Mammary epithelial cell (primary cell): ENCODE measurements at regions of chr2 and their contacts with region 1.

Region 1: DNA sequence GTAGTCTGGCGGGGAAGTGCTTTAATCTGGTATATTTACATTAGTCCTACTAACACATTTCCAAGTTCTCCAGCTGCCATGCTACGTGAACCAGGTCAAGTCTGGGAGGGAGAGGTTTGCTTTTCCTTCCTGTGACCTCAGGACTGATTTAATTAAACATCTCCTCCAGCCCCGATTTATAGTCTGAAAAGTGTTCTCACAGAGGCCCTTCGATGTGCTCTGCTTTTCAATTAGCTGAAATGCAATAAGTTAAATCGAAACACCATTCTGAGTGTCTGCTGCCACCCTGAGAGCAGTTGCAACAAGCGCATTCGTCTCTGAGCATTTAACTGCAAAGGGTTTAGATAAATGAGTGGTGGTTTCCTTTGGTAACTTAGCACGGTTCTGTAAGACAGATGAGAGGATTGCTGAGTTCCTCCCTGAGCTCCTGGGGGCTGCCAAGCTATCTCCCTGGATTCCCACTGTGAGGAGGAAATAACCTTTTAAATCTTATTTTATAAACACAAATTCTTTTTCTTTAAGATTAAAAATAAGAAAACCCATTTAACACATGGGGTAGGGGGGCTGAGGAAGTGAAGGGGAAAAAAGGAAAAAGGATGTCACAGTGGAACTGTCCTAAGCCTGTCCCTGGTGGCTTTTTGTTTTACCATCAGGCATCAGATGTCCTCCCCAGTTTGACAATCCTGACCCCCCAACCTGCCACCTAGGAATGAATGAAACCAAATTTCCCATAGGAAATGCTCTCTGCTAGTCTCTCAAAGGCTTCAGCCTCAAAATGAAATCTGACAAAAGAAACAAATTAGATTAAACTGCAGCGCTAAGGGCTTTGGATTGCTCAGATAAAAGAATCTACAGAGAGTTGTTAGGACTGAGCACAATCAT is 56.5 kb upstream of the CREB1 start:
- DNase-seq: peak; percentile 68
- H3K4me3 ChIP-seq: no peak overlapping the region
- H3K27ac ChIP-seq: peak overlapping the region; percentile 20
- H3K4me1 ChIP-seq: peaks cover 24% of the 10 kb centered on the region
- H3K27me3 ChIP-seq: no peaks in the 10 kb centered on the region
- CTCF ChIP-seq: peak; percentile 87 to 88

Region 2: DNA sequence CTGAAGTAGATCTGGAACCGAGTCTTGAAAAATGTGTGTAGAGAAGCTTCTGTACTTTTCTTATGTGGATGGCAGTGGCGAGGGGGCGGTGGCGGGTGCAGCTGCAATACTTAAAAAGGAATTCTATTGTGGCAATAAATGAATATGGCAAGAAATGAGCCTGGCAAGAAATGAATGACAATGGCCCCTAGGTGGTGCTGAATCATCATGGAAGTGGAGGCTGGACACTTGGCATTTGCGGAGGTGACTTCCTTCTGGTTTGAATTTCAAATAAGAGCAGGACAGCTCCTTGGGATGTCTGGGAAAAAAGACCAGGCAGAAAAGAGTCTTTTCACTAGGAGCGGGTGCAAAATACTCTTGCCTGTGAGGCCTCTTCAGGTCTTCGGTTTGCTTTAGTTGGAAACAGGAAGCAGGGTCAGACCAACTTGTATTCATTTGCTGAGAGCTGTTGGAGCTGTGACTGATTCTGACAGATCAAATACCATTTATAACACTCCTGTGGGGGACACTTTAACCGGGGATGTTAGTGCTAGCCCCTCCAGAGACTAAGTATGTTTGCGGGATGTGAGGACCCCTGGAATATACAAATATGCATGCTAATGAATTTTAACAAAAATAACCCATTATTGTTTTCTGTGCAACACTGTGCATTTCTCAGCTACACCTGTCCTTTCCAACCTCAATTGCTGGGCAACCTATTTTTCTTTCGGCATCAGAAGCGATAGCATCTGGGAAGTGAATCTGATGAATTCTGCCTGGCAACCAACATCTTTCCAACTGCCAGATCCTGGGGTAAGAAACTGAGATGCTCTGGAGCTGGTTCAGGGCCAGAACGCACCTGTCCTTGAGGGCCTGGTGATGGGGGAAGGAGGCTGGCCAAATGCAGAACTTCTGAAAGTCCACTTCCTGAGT is 672.5 kb before region 1 on chr2:
- CTCF ChIA-PET with region 1: no interaction called
- dilution Hi-C with region 1: no loop called
- in situ Hi-C with region 1: loop called (anchors 5 kb)
- intact Hi-C with region 1: loop called (anchors 1 kb)
- DNase-seq: peak; percentile 69
- H3K4me3 ChIP-seq: no peak overlapping the region
- H3K27ac ChIP-seq: no peak overlapping the region
- H3K4me1 ChIP-seq: no peaks in the 10 kb centered on the region
- H3K27me3 ChIP-seq: no peaks in the 10 kb centered on the region
- CTCF ChIP-seq: peak; percentile 66 to 75

Region 3: GRCh38 chr2:207073801-207074678 is 399.2 kb before region 1 on chr2:
- CTCF ChIA-PET with region 1: no interaction called
- dilution Hi-C with region 1: no loop called
- in situ Hi-C with region 1: no loop called
- intact Hi-C with region 1: loop called (anchors 10 kb)
- DNase-seq: no peak
- H3K4me3 ChIP-seq: no peak overlapping the region
- H3K27ac ChIP-seq: no peak overlapping the region
- H3K4me1 ChIP-seq: no peaks in the 10 kb centered on the region
- H3K27me3 ChIP-seq: no peaks in the 10 kb centered on the region
- CTCF ChIP-seq: no peak

Region 4: DNA sequence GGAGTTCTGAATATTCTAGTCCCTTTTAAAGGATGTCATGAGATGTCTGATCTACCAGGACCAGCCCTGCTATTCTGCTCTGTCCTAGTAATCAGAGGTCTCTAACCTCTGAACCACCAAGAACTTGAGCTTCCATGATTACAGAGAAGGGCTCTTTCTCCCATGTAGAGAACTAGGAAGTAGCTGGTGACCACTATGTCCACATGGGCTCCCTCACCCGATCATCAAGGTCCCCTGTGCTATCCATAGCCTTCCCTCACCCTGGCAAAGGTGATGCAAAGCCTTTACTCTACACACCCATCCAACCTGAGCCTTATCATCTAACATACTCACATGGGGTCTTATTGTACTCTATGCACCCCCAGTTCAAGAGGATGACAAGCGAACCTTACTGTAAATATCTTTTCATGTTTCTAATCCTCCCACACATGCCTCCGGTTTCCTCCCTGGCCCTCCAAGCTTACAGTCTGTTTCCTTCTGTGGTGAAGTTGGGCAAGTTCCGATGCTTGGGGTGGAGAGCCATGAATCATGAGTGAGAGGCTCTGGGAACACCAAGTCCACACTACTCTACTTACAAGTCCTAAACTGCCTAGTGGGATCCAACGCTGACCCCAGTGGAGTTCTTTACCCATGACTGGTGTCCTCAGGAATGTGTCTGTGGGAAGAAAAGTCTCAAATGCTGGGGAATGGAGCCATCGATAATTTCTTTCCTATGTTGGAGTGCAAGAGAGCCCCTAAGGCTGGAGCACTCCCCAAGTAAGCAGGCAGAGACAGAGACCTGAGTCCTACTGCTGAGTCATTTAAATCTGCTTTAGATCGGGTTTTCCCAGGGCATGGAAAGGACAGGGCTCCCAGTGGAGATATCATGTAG is 234.2 kb before region 1 on chr2:
- CTCF ChIA-PET with region 1: no interaction called
- dilution Hi-C with region 1: no loop called
- in situ Hi-C with region 1: no loop called
- intact Hi-C with region 1: loop called (anchors 1 kb)
- DNase-seq: peak; percentile 100
- H3K4me3 ChIP-seq: peak overlapping the region; percentile 31 to 84 (median 78)
- H3K27ac ChIP-seq: peak overlapping the region; percentile 100
- H3K4me1 ChIP-seq: peaks cover 51% of the 10 kb centered on the region
- H3K27me3 ChIP-seq: no peaks in the 10 kb centered on the region
- CTCF ChIP-seq: no peak

Region 5: GRCh38 chr2:207394812-207395534 is 78.3 kb before region 1 on chr2:
- CTCF ChIA-PET with region 1: no interaction called
- dilution Hi-C with region 1: no loop called
- in situ Hi-C with region 1: no loop called
- intact Hi-C with region 1: loop called (anchors 2 kb)
- DNase-seq: peak; percentile 100
- H3K4me3 ChIP-seq: no peak overlapping the region
- H3K27ac ChIP-seq: peak overlapping the region; percentile 98
- H3K4me1 ChIP-seq: peaks cover 36% of the 10 kb centered on the region
- H3K27me3 ChIP-seq: no peaks in the 10 kb centered on the region
- CTCF ChIP-seq: no peak

Region 6: GRCh38 chr2:207632575-207633493 is 159.5 kb after region 1 on chr2:
- CTCF ChIA-PET with region 1: no interaction called
- dilution Hi-C with region 1: no loop called
- in situ Hi-C with region 1: no loop called
- intact Hi-C with region 1: no loop called
- DNase-seq: peak; percentile 86
- H3K4me3 ChIP-seq: no peak overlapping the region
- H3K27ac ChIP-seq: peak overlapping the region; percentile 75
- H3K4me1 ChIP-seq: peaks cover 37% of the 10 kb centered on the region
- H3K27me3 ChIP-seq: no peaks in the 10 kb centered on the region
- CTCF ChIP-seq: no peak